Mammary epithelial cell (primary cell): ENCODE measurements at regions of chr11 and their contacts with region 1.

Region 1: DNA sequence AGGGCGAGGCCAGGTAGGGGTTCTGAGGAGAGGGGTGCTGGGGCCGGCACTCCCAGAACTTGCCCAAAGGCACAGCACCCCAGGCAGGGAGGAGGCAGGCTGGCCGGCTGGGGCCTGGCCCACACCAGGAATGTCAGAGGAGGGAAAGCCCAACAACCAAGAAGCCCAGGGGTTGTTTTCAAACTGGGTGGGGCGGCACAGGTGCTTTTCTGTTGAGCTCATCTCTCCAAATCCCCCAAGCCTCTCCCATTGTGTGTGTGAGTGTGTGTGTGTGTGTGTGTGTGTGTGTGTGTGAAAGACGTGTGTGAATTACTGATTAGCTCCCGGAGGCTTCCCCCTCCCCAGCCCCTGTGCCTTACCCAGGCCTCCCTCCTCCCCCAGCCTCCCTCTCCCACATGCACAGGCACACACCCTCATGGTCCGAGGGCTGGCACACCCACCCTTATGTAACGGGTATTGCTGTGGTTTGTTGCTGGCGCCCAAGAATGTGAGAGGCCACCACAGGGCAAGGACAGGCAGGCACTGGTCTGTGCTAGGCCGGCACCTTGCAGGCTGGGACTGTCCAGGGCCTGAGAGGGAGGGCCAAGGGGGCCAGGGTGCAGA is 15.9 kb downstream of the TRIM29 start:
- DNase-seq: peak; percentile 95
- H3K4me3 ChIP-seq: no peak overlapping the region
- H3K27ac ChIP-seq: peak overlapping the region; percentile 87
- H3K4me1 ChIP-seq: peaks cover 53% of the 10 kb centered on the region
- H3K27me3 ChIP-seq: no peaks in the 10 kb centered on the region
- CTCF ChIP-seq: no peak

Region 2: DNA sequence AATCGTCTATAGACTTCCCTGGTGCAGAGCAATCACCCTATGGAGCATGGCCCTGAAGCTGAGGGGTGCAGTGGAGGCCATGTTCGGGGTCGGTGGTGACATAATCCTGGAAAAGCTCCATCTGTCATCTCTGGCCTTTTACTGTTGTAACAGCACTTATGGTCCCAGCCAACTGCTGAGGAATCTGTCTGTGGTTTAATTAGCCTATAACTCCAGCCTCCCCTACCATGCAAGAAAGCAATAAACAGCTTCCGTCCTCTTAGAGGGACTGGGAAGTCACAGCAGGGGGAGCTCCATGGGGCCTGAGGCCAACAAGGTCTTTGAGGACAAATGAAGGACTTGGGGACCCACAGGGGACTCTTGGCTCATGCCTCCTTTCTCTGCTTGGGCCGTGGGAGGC is 233.9 kb before region 1 on chr11:
- CTCF ChIA-PET with region 1: no interaction called
- dilution Hi-C with region 1: no loop called
- in situ Hi-C with region 1: no loop called
- intact Hi-C with region 1: no loop called
- DNase-seq: no peak
- H3K4me3 ChIP-seq: no peak overlapping the region
- H3K27ac ChIP-seq: no peak overlapping the region
- H3K4me1 ChIP-seq: no peaks in the 10 kb centered on the region
- H3K27me3 ChIP-seq: no peaks in the 10 kb centered on the region
- CTCF ChIP-seq: no peak

Region 3: GRCh38 chr11:120137611-120138521 is 15.9 kb after region 1 on chr11 and contains the start of gene TRIM29:
- CTCF ChIA-PET with region 1: no interaction called
- dilution Hi-C with region 1: no loop called
- in situ Hi-C with region 1: no loop called
- intact Hi-C with region 1: loop called (anchors 1 kb)
- DNase-seq: peak; percentile 92
- H3K4me3 ChIP-seq: peak within 1 kb of the TSS; percentile 51 to 97 (median 96)
- H3K27ac ChIP-seq: peak within 1 kb of the TSS; percentile 78
- H3K4me1 ChIP-seq: peaks cover 37% of the 10 kb centered on the region
- H3K27me3 ChIP-seq: no peaks in the 10 kb centered on the region
- CTCF ChIP-seq: peak; percentile 59 to 60
- total RNA-seq, gene TRIM29: 256 to 341 TPM

Region 4: DNA sequence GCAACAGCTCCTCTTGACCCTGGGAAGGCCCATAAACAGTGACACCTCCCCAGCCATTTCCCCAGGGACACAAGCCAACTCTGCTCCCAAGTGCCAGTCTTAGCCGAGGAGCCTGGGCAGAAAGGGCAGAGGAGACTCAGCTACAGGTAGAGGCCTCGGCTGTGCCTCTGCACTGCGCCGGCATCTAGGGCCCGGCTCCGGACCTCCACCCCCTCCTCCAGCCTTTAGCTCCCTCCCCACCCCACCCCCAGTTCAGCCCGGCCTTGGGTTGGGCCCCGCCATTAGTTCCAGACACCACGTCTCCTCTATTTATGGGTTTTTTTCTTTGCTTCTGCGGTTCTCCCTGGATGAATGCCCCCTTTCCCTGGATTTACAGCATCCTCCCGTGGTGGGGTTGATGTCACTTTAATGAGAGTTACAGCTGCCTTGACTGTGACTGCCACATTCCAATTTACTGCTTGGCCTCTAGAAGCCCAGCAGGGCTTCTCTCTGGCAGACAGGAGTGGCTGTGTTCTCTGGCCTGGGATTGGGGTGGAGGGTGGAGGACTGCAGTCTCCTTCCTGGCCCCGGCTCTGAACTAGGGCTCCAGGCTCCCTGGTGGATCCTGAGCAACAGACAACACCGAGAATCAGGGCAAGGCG is 75.4 kb after region 1 on chr11:
- CTCF ChIA-PET with region 1: no interaction called
- dilution Hi-C with region 1: no loop called
- in situ Hi-C with region 1: no loop called
- intact Hi-C with region 1: no loop called
- DNase-seq: no peak
- H3K4me3 ChIP-seq: no peak overlapping the region
- H3K27ac ChIP-seq: no peak overlapping the region
- H3K4me1 ChIP-seq: no peaks in the 10 kb centered on the region
- H3K27me3 ChIP-seq: peaks cover 2% of the 10 kb centered on the region
- CTCF ChIP-seq: no peak